Endothelial cell of umbilical vein (primary cell): ENCODE measurements at regions of chr17 and their contacts with region 1.

Region 1: GRCh38 chr17:43791589-43791988 is 11.4 kb downstream of the CFAP97D1 start:
- DNase-seq: peak; percentile 40
- H3K4me3 ChIP-seq: no peak overlapping the region
- H3K27ac ChIP-seq: no peak overlapping the region
- H3K4me1 ChIP-seq: no peaks in the 10 kb centered on the region
- H3K27me3 ChIP-seq: peaks cover 0 to 1% of the 10 kb centered on the region in 2 experiments
- CTCF ChIP-seq: no peak
- POLR2A ChIP-seq: no peak

Region 2: GRCh38 chr17:43840814-43841213 is 49.2 kb after region 1 on chr17:
- CTCF ChIA-PET with region 1: interaction called, 153 read pairs
- POLR2A ChIA-PET with region 1: no interaction called
- dilution Hi-C with region 1: no loop called
- intact Hi-C with region 1: loop called (anchors 1 kb)
- DNase-seq: peak; percentile 59
- H3K4me3 ChIP-seq: no peak overlapping the region
- H3K27ac ChIP-seq: no peak overlapping the region
- H3K4me1 ChIP-seq: no peaks in the 10 kb centered on the region
- H3K27me3 ChIP-seq: peaks cover 0 to 2% of the 10 kb centered on the region in 2 experiments
- CTCF ChIP-seq: peak in 1 of 2 donors; percentile 32
- POLR2A ChIP-seq: no peak